Endothelial cell of umbilical vein (primary cell): ENCODE measurements at regions of chrX and their contacts with region 1.

Region 1: GRCh38 chrX:63250253-63250868 is 100.8 kb downstream of the SPIN4 start:
- DNase-seq: peak; percentile 72
- H3K4me3 ChIP-seq: no peak overlapping the region
- H3K27ac ChIP-seq: no peak overlapping the region
- H3K4me1 ChIP-seq: no peaks in the 10 kb centered on the region
- H3K27me3 ChIP-seq: no peaks in the 10 kb centered on the region
- CTCF ChIP-seq: peak; percentile 45 to 64
- POLR2A ChIP-seq: no peak

Region 2: GRCh38 chrX:63506320-63506719 is 256.0 kb after region 1 on chrX:
- CTCF ChIA-PET with region 1: interaction called, 41 read pairs
- POLR2A ChIA-PET with region 1: no interaction called
- dilution Hi-C with region 1: no loop called
- intact Hi-C with region 1: no loop called
- DNase-seq: peak; percentile 50
- H3K4me3 ChIP-seq: no peak overlapping the region
- H3K27ac ChIP-seq: no peak overlapping the region
- H3K4me1 ChIP-seq: no peaks in the 10 kb centered on the region
- H3K27me3 ChIP-seq: no peaks in the 10 kb centered on the region
- CTCF ChIP-seq: peak in 1 of 2 donors; percentile 13
- POLR2A ChIP-seq: no peak

Region 3: GRCh38 chrX:63686878-63687714 is 436.7 kb after region 1 on chrX:
- CTCF ChIA-PET with region 1: interaction called, 24 read pairs
- POLR2A ChIA-PET with region 1: no interaction called
- dilution Hi-C with region 1: no loop called
- intact Hi-C with region 1: no loop called
- DNase-seq: peak; percentile 38
- H3K4me3 ChIP-seq: no peak overlapping the region
- H3K27ac ChIP-seq: no peak overlapping the region
- H3K4me1 ChIP-seq: no peaks in the 10 kb centered on the region
- H3K27me3 ChIP-seq: no peaks in the 10 kb centered on the region
- CTCF ChIP-seq: peak; percentile 36 to 47
- POLR2A ChIP-seq: no peak